Right cardiac atrium (tissue), 5 donors: ENCODE measurements at regions of chr13 and their contacts with region 1.

Region 1: GRCh38 chr13:52128714-52129700 is at the start of gene NEK5:
- DNase-seq: peak; percentile 66 to 85 (median 83)
- ATAC-seq: peak; percentile 91 to 92
- H3K4me3 ChIP-seq: peak within 1 kb of the TSS; percentile 86
- H3K27ac ChIP-seq: no peak within 1 kb of the TSS
- H3K4me1 ChIP-seq: no peaks in the 10 kb centered on the region
- H3K27me3 ChIP-seq: no peaks in the 10 kb centered on the region
- total RNA-seq, gene NEK5: 0.39 to 1.2 (median 0.63) TPM

Region 2: GRCh38 chr13:51814825-51815650 is 314.0 kb before region 1 on chr13:
- intact Hi-C with region 1: loop called in 2 of 4 experiments (anchors 10 kb)
- DNase-seq: peak in 2 of 3 donors; percentile 51 to 78
- ATAC-seq: peak; percentile 60 to 64
- H3K4me3 ChIP-seq: no peak overlapping the region
- H3K27ac ChIP-seq: no peak overlapping the region
- H3K4me1 ChIP-seq: peaks cover 7% of the 10 kb centered on the region
- H3K27me3 ChIP-seq: no peaks in the 10 kb centered on the region

Region 3: DNA sequence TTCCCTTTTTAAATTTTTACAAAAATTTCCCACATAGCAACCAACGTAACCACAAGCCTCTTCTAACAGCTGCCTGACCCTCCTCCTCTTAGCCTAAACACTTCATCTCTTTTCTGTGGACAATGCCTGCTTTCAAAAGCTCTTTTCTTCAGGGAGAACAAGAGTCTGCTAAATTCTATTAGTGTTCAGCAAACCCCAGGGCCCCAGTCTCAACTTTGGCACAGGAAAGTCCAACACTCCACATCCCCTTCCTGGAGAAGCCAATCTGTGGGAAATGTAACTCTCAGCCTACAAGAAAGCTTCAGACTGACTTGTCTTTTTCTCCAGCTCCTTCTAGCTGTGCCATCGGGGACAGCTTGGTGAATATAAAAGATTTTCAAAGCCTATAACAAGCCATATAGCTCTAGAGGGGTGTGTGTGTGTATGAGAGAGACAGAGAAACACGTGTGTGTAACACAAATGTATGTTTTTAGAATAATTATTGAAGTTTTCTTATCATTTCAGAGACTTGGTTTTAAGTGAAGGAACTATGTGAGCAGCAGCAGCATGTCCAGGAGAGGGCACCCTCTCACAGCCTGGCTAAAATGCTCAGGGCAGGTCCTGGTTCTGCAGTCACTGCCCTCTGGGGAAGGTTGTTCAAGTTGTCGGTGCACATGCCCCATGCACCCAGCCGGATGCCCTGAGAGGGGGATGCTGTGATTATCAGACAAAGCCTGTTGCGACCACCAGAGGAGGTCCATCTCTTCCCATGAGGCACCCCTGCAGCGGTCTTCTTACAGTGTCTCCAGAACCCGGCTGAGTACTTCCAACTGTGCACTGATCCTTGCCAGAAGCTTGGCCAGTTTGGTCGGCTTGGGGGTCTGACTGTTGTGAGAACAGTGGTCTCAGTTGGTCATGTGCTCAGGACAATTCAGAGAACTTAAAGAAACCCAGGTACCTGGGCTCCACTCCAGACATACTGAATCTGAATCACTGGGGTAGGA is 232.8 kb before region 1 on chr13:
- intact Hi-C with region 1: loop called in 3 of 4 experiments (anchors 5 to 10 kb)
- DNase-seq: peak; percentile 29 to 76 (median 71)
- ATAC-seq: peak; percentile 85 to 90
- H3K4me3 ChIP-seq: no peak overlapping the region
- H3K27ac ChIP-seq: no peak overlapping the region
- H3K4me1 ChIP-seq: no peaks in the 10 kb centered on the region
- H3K27me3 ChIP-seq: no peaks in the 10 kb centered on the region

Region 4: DNA sequence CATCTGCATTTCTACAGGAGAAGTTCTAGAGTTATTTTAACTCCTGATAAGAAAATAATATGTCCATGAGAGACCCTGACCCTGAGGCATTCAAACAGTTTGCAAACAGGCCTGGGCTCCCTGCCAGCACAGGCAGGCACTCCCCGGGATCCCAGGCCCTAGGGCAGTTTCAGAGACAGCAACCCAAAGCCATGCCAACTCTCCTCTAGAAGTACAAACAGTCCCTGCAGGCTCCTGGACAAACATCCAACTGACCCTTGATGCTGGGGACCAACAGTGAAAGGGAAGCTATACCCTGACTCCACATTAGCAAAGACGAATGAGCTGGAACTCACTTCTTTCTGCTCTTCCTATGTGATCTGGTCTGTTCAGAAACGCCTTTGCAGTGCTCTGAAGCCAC is 222.4 kb before region 1 on chr13:
- intact Hi-C with region 1: loop called in 1 of 4 experiments (anchors 10 kb)
- DNase-seq: peak in 1 of 3 donors; percentile 61
- ATAC-seq: peak; percentile 35 to 80
- H3K4me3 ChIP-seq: no peak overlapping the region
- H3K27ac ChIP-seq: peak overlapping the region; percentile 81
- H3K4me1 ChIP-seq: peaks cover 7% of the 10 kb centered on the region
- H3K27me3 ChIP-seq: no peaks in the 10 kb centered on the region

Region 5: GRCh38 chr13:51995677-51996551 is 133.1 kb before region 1 on chr13:
- intact Hi-C with region 1: loop called (anchors 5 to 10 kb)
- DNase-seq: peak; percentile 32 to 79 (median 69)
- ATAC-seq: peak; percentile 86 to 91
- H3K4me3 ChIP-seq: no peak overlapping the region
- H3K27ac ChIP-seq: peak overlapping the region; percentile 60
- H3K4me1 ChIP-seq: peaks cover 17% of the 10 kb centered on the region
- H3K27me3 ChIP-seq: no peaks in the 10 kb centered on the region

Region 6: DNA sequence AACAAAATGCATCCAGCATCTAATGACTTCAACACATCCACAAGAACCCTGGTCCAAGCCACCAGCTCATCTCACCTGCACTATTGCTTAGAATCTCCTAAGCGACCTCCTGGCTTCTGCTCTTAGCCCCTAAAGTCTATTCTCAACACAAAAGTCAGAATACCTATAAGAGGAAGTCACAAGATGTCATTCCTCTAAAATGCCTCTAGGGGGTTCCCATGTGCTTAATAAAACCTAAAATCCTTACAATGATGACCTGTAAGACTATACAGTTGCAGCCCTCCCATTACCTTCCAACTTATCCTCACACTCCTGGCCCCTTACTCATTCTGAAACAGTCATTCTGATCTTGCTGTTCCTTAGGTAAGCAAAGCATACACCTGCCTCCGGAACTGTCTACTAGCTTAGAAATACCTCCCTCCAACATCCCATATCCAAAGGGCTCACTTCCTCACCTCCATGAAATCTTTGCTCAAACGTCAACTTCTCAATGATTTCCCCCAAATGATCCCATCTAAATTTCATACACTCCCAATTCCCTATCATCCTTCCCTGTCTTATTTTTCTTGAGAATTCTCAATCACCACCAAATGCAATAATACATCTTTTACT is 127.8 kb before region 1 on chr13:
- intact Hi-C with region 1: loop called (anchors 5 to 10 kb)
- DNase-seq: no peak
- ATAC-seq: peak; percentile 23 to 51
- H3K4me3 ChIP-seq: no peak overlapping the region
- H3K27ac ChIP-seq: no peak overlapping the region
- H3K4me1 ChIP-seq: peaks cover 9% of the 10 kb centered on the region
- H3K27me3 ChIP-seq: no peaks in the 10 kb centered on the region